A673 (cell line): ENCODE measurements at regions of chr2 and their contacts with region 1.

Region 1: DNA sequence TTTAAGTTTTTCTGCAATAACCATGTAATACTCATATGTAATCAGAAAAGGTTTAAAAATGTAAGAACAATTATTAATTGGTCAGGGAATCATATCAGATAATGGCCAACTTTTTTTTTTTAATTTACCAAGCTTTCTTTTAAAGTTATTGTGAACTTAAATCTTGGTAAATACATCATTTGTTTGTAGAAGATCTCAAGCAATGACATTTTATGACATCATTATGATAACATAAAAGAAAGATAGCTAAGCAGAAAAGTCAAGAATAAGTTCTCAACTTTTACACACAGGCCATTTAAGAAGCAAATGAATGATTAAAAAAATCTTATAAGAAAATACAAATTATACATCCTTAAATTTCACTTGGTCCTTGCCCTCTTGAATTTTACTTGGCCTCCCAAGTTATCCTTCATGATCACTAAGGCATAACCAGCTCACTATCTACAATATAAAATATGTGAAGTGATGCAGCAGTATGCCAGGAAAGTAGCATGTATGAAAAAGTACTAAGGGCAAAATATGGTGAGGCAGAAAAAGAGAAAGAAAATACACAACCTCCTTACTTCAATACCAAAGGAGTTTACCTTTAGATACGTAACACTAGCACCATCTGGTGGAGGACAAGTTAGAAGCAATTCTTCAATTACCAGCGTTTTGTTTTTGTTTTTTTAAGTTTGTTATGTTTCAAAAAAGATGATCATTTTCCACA is 116.6 kb downstream of the SRBD1 start:
- DNase-seq: peak; percentile 68
- H3K4me3 ChIP-seq: no peak overlapping the region
- H3K27ac ChIP-seq: no peak overlapping the region
- H3K4me1 ChIP-seq: no peaks in the 10 kb centered on the region
- H3K27me3 ChIP-seq: no peaks in the 10 kb centered on the region
- CTCF ChIP-seq: peak; percentile 78

Region 2: DNA sequence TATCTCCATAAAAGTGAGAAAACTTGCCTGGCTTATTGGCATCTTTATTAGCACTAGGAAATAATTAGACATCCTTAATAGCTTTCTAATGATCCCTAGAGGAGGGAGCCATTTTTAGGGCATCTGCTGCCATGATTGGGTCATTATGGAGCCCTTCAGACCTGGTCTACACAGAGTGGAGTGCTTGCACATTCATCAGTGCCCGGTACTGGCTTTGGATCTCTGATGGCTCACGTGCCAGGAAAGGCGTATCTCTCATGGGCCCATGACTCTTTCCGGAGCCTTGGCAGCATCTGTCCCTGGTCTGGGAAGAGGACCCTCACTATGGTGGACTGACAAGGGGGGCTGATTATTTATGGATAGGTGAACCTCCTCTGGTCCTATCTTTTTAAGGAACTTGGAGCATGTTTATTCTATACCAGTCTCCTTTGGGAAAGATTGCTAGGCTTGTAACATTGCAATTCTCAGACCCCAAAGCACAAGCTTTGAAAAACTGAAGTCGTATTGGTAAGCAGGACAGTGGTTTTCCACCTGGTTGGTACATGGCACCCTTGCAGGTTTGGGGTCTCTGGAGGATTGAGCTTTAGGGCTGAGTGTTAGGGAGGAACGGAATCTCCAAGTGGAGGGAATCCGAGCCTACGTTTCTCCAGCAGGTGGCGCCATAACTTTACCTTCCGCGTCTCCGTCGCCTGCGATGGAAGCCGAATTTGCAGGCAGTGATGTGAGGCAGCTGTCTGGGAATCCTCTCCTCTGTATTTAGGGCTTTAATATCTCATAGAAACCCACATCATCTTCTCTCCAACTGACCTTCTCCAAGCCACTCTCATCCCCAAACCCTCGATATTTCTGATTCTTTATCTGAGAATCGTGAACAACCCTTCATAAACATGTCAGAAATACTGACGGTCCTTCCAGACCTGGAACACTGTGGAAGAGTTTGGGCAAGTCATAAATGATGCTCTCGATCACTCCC is 513.0 kb before region 1 on chr2:
- CTCF ChIA-PET with region 1: interaction called, 10 read pairs
- POLR2A ChIA-PET with region 1: no interaction called
- intact Hi-C with region 1: loop called (anchors 1 kb)
- DNase-seq: peak; percentile 85
- H3K4me3 ChIP-seq: no peak overlapping the region
- H3K27ac ChIP-seq: no peak overlapping the region
- H3K4me1 ChIP-seq: no peaks in the 10 kb centered on the region
- H3K27me3 ChIP-seq: no peaks in the 10 kb centered on the region
- CTCF ChIP-seq: peak; percentile 86

Region 3: GRCh38 chr2:45169339-45170190 is 324.9 kb before region 1 on chr2:
- CTCF ChIA-PET with region 1: no interaction called
- POLR2A ChIA-PET with region 1: no interaction called
- intact Hi-C with region 1: loop called (anchors 10 kb)
- DNase-seq: no peak
- H3K4me3 ChIP-seq: peak overlapping the region; percentile 34
- H3K27ac ChIP-seq: no peak overlapping the region
- H3K4me1 ChIP-seq: no peaks in the 10 kb centered on the region
- H3K27me3 ChIP-seq: peaks cover 95% of the 10 kb centered on the region
- CTCF ChIP-seq: no peak

Region 4: GRCh38 chr2:45578056-45578809 is 83.8 kb after region 1 on chr2:
- CTCF ChIA-PET with region 1: no interaction called
- POLR2A ChIA-PET with region 1: no interaction called
- intact Hi-C with region 1: loop called (anchors 5 kb)
- DNase-seq: peak; percentile 78
- H3K4me3 ChIP-seq: no peak overlapping the region
- H3K27ac ChIP-seq: no peak overlapping the region
- H3K4me1 ChIP-seq: peaks cover 26% of the 10 kb centered on the region
- H3K27me3 ChIP-seq: no peaks in the 10 kb centered on the region
- CTCF ChIP-seq: peak; percentile 81